ENCODE measurements at regions of chr1 and their contacts with region 1.

Region 1: GRCh38 chr1:208219659-208220282 is 24.4 kb downstream of the PLXNA2 start:
- DNase-seq: peak; percentile 79 to 87
- ATAC-seq: peak; percentile 77 to 94 (median 88)
- H3K4me3 ChIP-seq: peak overlapping the region; percentile 39
- H3K27ac ChIP-seq: peak overlapping the region; percentile 79
- H3K4me1 ChIP-seq: peaks cover 61% of the 10 kb centered on the region
- H3K27me3 ChIP-seq: no peaks in the 10 kb centered on the region
- CTCF ChIP-seq: no peak

Region 2: DNA sequence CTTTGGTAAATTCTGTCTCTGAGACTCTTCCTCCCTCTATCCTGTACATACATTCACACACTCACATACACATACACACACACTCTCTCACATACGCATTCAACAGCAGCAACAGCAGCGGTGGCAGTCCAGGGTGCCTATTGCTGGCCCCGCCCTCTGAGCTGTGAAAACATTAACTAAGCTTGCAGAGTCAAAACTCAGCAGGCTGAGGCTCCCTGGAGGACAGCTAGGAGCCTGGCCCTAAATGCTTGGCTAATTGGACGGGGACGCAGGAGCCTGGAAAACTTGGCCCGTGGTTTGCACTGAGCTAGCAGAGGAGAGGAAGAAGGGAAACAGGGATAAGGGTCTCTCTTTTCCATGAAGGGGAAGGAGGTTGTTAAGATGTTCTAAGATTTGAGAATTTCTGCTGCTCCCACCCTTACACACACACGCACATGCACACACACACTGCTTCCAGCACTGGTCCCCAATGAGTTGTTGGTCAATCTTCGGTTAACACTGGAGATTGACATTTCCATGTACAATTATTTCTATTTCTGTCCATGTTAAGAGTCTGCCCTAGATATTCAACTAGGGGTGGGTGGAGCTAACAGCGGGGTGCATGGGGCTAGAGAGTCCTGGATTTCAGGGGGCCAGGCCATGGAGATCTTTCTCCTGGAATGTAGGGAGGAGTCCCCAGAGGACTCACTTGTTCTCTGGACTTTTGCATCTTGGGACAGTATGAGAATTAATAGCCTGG is 69.8 kb before region 1 on chr1:
- intact Hi-C with region 1: loop called in 1 of 2 experiments (anchors 5 kb)
- DNase-seq: no peak
- ATAC-seq: no peak
- H3K4me3 ChIP-seq: no peak overlapping the region
- H3K27ac ChIP-seq: no peak overlapping the region
- H3K4me1 ChIP-seq: peaks cover 85% of the 10 kb centered on the region
- H3K27me3 ChIP-seq: no peaks in the 10 kb centered on the region
- CTCF ChIP-seq: no peak

Region 3: GRCh38 chr1:208203127-208203847 is 16.5 kb before region 1 on chr1:
- intact Hi-C with region 1: loop called in 1 of 2 experiments (anchors 2 kb)
- DNase-seq: peak in 1 of 2 donors; percentile 41
- ATAC-seq: no peak
- H3K4me3 ChIP-seq: no peak overlapping the region
- H3K27ac ChIP-seq: peak overlapping the region; percentile 54
- H3K4me1 ChIP-seq: peaks cover 37% of the 10 kb centered on the region
- H3K27me3 ChIP-seq: no peaks in the 10 kb centered on the region
- CTCF ChIP-seq: no peak